ENCODE measurements at regions of chr2 and their contacts with region 1.

Region 1: DNA sequence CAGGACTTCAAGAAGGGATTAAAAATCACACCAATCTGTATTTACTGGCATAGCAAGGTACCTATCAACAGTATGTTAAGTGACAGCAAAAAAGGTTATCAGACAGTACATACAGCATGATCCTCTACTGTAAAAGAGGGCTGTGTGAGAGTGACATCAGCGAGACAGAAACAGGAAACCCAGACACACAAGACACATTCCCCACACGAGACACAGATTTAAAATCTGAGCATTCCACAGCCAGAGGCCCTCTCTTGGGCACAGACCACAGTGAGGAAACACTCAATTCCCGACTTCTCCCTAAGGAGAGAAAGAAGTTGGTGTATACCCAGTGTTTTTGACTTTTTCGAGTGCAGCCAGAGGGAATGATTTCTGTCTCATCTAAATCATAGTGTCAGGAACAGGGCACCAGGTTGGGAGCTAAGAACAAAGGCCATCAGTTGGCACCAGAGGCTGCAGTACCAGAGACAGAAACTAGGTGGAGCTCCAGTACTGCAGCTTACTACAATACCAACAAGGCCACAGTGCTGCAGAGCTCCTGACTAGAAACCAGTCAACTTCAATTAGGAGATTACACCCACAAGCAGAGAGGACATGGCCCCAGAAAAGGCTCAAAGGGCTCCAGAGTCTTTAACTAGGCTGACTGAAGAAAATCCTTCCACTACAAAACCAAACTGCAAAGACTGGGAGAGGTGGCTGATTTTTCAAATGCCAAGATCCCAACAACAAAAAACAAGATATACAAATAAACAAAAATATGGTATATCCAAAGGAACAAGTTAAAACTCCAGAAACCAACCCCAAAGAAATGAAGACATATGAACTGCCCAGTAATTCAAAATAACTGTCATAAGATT is 41.0 kb downstream of the UNC50 start:
- DNase-seq: peak; percentile 88
- ATAC-seq: peak; percentile 93
- H3K4me3 Mint-ChIP-seq: no peak overlapping the region
- H3K27ac Mint-ChIP-seq: peak overlapping the region; percentile 73
- H3K4me1 Mint-ChIP-seq: peaks cover 58% of the 10 kb centered on the region
- H3K27me3 Mint-ChIP-seq: no peaks in the 10 kb centered on the region

Region 2: GRCh38 chr2:98334439-98335078 is 314.8 kb before region 1 on chr2:
- CTCF ChIA-PET with region 1: no interaction called
- POLR2A ChIA-PET with region 1: no interaction called
- intact Hi-C with region 1: no loop called
- DNase-seq: no peak
- ATAC-seq: no peak
- H3K4me3 Mint-ChIP-seq: no peak overlapping the region
- H3K27ac Mint-ChIP-seq: no peak overlapping the region
- H3K4me1 Mint-ChIP-seq: no peaks in the 10 kb centered on the region
- H3K27me3 Mint-ChIP-seq: peaks cover 16% of the 10 kb centered on the region

Region 3: DNA sequence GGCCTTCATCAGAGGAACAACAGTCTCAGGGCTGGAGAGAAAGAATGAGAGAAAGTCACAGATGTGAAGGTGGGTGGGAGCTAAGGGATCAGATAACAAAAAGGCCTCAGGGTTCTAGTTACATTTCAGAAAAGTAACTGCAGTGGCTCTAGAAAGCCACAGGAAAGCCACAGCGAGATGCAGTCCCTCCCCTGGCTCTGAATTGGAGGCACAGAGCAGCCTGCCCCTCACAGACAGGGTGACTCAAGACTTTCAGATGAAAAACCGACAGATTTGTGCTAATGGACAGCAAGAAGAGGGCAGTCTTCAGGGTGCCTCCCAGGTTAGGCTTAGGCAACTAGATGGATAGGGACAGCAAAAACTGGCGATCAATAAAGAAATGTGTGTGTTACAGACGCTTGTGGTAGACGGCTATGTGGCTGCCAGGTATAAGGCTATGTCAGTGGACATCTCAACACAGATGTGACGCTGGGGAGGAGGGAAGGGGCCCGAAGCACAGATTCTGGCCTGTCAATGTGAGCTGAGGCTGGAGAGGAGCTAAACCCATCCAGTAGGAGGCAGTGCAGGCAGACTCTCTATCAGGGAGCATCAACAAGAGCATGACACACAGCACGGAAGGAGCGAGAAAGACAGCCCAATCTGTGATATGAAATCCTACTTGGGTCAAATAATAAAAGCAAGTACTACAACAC is 14.8 kb before region 1 on chr2:
- CTCF ChIA-PET with region 1: interaction called, 15 read pairs
- POLR2A ChIA-PET with region 1: no interaction called
- intact Hi-C with region 1: no loop called
- DNase-seq: peak; percentile 79
- ATAC-seq: peak; percentile 67
- H3K4me3 Mint-ChIP-seq: peak overlapping the region; percentile 44
- H3K27ac Mint-ChIP-seq: peak overlapping the region; percentile 85
- H3K4me1 Mint-ChIP-seq: peaks cover 38% of the 10 kb centered on the region
- H3K27me3 Mint-ChIP-seq: no peaks in the 10 kb centered on the region

Region 4: GRCh38 chr2:98822301-98823164 is 173.2 kb after region 1 on chr2:
- CTCF ChIA-PET with region 1: interaction called, 17 read pairs
- POLR2A ChIA-PET with region 1: no interaction called
- intact Hi-C with region 1: no loop called
- DNase-seq: peak; percentile 82
- ATAC-seq: peak; percentile 94
- H3K4me3 Mint-ChIP-seq: peak overlapping the region; percentile 23
- H3K27ac Mint-ChIP-seq: no peak overlapping the region
- H3K4me1 Mint-ChIP-seq: peaks cover 7% of the 10 kb centered on the region
- H3K27me3 Mint-ChIP-seq: peaks cover 2% of the 10 kb centered on the region

Region 5: GRCh38 chr2:98828793-98829371 is 179.5 kb after region 1 on chr2:
- CTCF ChIA-PET with region 1: interaction called, 17 read pairs
- POLR2A ChIA-PET with region 1: no interaction called
- intact Hi-C with region 1: no loop called
- DNase-seq: no peak
- ATAC-seq: no peak
- H3K4me3 Mint-ChIP-seq: no peak overlapping the region
- H3K27ac Mint-ChIP-seq: peak overlapping the region; percentile 32
- H3K4me1 Mint-ChIP-seq: peaks cover 36% of the 10 kb centered on the region
- H3K27me3 Mint-ChIP-seq: no peaks in the 10 kb centered on the region

Region 6: GRCh38 chr2:98899041-98899702 is 249.8 kb after region 1 on chr2:
- CTCF ChIA-PET with region 1: no interaction called
- POLR2A ChIA-PET with region 1: no interaction called
- intact Hi-C with region 1: no loop called
- DNase-seq: no peak
- ATAC-seq: no peak
- H3K4me3 Mint-ChIP-seq: no peak overlapping the region
- H3K27ac Mint-ChIP-seq: no peak overlapping the region
- H3K4me1 Mint-ChIP-seq: no peaks in the 10 kb centered on the region
- H3K27me3 Mint-ChIP-seq: no peaks in the 10 kb centered on the region

Region 7: GRCh38 chr2:99066075-99066958 is 417.0 kb after region 1 on chr2:
- CTCF ChIA-PET with region 1: interaction called, 6 read pairs
- POLR2A ChIA-PET with region 1: no interaction called
- intact Hi-C with region 1: loop called (anchors 1 to 2 kb)
- DNase-seq: peak; percentile 46
- ATAC-seq: peak; percentile 98
- H3K4me3 Mint-ChIP-seq: no peak overlapping the region
- H3K27ac Mint-ChIP-seq: no peak overlapping the region
- H3K4me1 Mint-ChIP-seq: no peaks in the 10 kb centered on the region
- H3K27me3 Mint-ChIP-seq: no peaks in the 10 kb centered on the region